Activated T-helper 2 cell treated with anti-CD3 and anti-CD28 coated beads, Interferon-gamma antibody, Interleukin-2, Interleukin-4, amounts not matched to agents 10 μg/mL and 5 μg/mL and 100 μg/mL, durations not matched to agents 14 hours and 24 hours and 36 hours (primary cell): ENCODE measurements at regions of chr1 and their contacts with region 1.

Region 1: DNA sequence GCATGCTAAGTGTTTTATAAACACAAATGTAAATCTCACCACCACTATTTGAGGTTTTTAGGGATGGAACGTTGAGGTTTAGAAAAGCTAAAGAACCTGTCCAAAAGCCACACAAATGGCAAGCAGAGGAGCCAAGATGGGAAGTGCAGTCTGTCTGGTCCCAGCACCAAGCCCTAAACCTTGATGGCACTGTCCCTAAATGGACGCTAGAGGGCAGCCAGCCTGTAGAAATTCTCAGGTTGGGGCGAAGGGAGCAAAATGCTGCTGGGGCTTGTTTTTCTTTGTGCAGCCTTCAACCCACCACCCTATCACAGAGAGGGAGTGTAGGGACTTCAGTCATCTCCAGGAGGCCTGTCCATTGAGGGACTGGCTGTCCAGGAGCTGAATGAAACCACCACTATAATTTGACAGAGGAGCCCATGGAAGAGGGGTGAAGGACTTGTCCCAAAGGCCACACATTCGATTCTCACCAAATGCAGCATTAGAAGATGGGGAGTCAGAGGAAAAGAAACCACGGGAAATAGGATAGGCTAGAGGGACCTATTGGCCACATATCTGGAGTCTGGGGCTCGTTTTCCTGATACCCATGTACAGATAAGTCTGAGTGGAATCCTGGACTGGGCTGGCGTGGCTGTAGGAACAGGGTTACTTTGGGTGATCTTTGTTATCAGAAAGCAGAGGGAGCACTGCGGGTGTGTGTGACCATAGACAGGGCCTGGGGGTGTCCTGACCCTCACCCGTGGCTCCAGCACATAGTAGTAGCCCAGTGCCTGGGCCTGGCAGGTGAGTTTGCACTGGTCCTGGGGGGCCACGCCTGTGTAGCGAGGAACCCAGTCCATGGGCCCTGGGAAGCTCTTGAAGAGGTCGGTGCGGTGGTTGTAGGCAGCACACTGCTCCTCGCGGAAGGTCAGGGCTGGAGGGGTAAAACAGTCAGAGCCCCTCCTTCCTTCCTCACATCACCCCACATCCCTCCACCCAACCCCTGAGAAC is 6.1 kb downstream of the ADAMTS4 start:
- DNase-seq: peak; percentile 63
- H3K4me3 Mint-ChIP-seq: no peak overlapping the region
- H3K27ac Mint-ChIP-seq: peak overlapping the region; percentile 74
- H3K4me1 Mint-ChIP-seq: peaks cover 17% of the 10 kb centered on the region
- H3K27me3 Mint-ChIP-seq: no peaks in the 10 kb centered on the region

Region 2: GRCh38 chr1:161382214-161383019 is 189.6 kb after region 1 on chr1:
- intact Hi-C with region 1: loop called (anchors 5 kb)
- DNase-seq: no peak
- H3K4me3 Mint-ChIP-seq: no peak overlapping the region
- H3K27ac Mint-ChIP-seq: no peak overlapping the region
- H3K4me1 Mint-ChIP-seq: peaks cover 18% of the 10 kb centered on the region
- H3K27me3 Mint-ChIP-seq: no peaks in the 10 kb centered on the region